ENCODE measurements at regions of chr16 and their contacts with region 1.

Region 1: GRCh38 chr16:88650749-88651275 is at the start of gene CYBA:
- DNase-seq: peak; percentile 97
- H3K4me3 Mint-ChIP-seq: peak within 1 kb of the TSS; percentile 90
- H3K27ac Mint-ChIP-seq: peak within 1 kb of the TSS; percentile 96
- H3K4me1 Mint-ChIP-seq: peaks cover 15% of the 10 kb centered on the region
- H3K27me3 Mint-ChIP-seq: no peaks in the 10 kb centered on the region
- total RNA-seq, gene CYBA: 222 and 228 TPM in 2 replicates

Region 2: DNA sequence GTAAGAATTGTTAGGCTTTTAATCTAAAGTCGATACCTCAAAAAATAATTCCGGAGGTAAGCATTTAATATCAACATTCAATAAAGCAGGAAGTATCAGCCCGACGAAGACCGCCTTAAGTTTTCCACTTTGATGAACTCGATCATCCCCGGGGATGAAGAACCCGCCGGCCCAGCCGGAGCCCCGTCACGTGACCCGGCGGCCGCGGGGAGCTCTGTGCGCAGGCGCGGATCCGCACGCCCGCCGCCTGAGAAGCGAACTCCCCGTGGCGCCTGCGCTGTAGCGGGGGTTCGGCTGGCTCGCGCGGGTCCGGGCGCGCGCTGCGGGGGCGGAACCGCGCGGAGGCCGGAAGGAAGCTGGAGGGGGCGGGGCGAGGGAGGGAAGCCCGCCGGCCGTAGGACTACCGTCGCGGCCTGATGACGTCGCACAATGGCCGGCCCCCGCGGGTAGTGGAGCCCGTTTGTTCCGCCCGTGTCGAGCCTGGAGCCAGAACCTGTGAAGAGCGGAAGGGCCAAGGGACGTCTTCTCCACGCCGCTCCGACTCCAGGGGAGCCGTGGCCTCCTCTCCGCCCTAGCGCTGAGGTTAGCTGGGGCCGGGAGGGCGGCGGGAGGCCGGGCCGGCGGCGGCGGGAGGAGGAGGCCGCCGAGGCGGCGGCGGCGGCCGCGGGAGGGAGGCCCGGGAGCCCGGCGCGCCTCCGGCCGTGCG is 80.7 kb before region 1 on chr16 and contains the start of gene ZC3H18:
- intact Hi-C with region 1: loop called (anchors 2 kb)
- DNase-seq: peak; percentile 99
- H3K4me3 Mint-ChIP-seq: peak within 1 kb of the TSS; percentile 91
- H3K27ac Mint-ChIP-seq: peak within 1 kb of the TSS; percentile 90
- H3K4me1 Mint-ChIP-seq: peaks cover 36% of the 10 kb centered on the region
- H3K27me3 Mint-ChIP-seq: no peaks in the 10 kb centered on the region
- total RNA-seq, gene ZC3H18: 106 and 118 TPM in 2 replicates

Region 3: GRCh38 chr16:88633684-88634140 is 17.1 kb before region 1 on chr16:
- intact Hi-C with region 1: loop called (anchors 2 kb)
- DNase-seq: peak; percentile 76
- H3K4me3 Mint-ChIP-seq: peak overlapping the region; percentile 56
- H3K27ac Mint-ChIP-seq: peak overlapping the region; percentile 41
- H3K4me1 Mint-ChIP-seq: peaks cover 20% of the 10 kb centered on the region
- H3K27me3 Mint-ChIP-seq: peaks cover 14% of the 10 kb centered on the region

Region 4: GRCh38 chr16:88686439-88687253 is 35.8 kb after region 1 on chr16 and contains the start of gene SNAI3:
- intact Hi-C with region 1: loop called (anchors 1 kb)
- DNase-seq: peak; percentile 98
- H3K4me3 Mint-ChIP-seq: peak within 1 kb of the TSS; percentile 83
- H3K27ac Mint-ChIP-seq: peak within 1 kb of the TSS; percentile 37
- H3K4me1 Mint-ChIP-seq: peaks cover 43% of the 10 kb centered on the region
- H3K27me3 Mint-ChIP-seq: no peaks in the 10 kb centered on the region
- total RNA-seq, gene SNAI3: 3.0 and 3.3 TPM in 2 replicates

Region 5: GRCh38 chr16:88785106-88785924 is 134.5 kb after region 1 on chr16 and contains the start of gene PIEZO1:
- intact Hi-C with region 1: loop called (anchors 5 kb)
- DNase-seq: peak; percentile 96
- H3K4me3 Mint-ChIP-seq: peak within 1 kb of the TSS; percentile 81
- H3K27ac Mint-ChIP-seq: peak within 1 kb of the TSS; percentile 81
- H3K4me1 Mint-ChIP-seq: peaks cover 43% of the 10 kb centered on the region
- H3K27me3 Mint-ChIP-seq: no peaks in the 10 kb centered on the region
- total RNA-seq, gene PIEZO1: 219 and 226 TPM in 2 replicates